ENCODE measurements at regions of chr20 and their contacts with region 1.

Region 1: DNA sequence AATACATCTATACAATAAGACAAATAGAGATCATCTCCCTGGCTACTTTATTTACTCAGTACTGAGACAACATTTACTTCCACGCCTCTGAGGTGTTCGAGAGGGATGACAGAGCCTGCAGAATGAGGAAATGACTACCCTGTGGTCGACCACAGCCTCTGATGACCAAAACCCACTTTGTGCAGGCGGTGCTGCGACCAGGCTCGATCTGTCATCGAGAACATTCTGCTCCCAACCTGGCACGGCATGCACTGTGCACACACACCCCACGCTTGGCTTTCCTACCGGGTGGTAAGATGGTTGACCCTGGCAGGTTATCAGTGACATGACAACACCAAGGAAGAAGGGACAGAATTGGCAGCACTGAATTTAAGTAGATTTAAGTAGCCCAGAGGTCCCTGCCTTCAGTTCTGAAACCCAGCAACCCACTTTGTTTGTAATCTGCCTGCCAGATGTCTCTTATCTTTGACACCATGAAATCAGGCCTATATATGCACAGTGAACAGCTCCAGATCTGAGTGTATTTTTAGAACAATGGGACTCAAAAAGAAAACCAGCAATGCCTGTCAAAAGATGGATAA is 42.6 kb downstream of the TTI1 start:
- DNase-seq: no peak
- H3K4me3 ChIP-seq: no peak overlapping the region
- H3K27ac ChIP-seq: peak overlapping the region; percentile 57 to 74 (median 63)
- H3K4me1 ChIP-seq: peaks cover 70 to 88% (median 85%) of the 10 kb centered on the region in 4 donors
- H3K27me3 ChIP-seq: no peaks in the 10 kb centered on the region
- CTCF ChIP-seq: no peak
- EP300 ChIP-seq: peak; percentile 28
- POLR2A ChIP-seq: no peak

Region 2: GRCh38 chr20:37384683-37385174 is 605.9 kb before region 1 on chr20:
- intact Hi-C with region 1: no loop called
- DNase-seq: no peak
- H3K4me3 ChIP-seq: peak overlapping the region; percentile 47 to 66 (median 58)
- H3K27ac ChIP-seq: peak overlapping the region in 2 of 4 donors; percentile 60 to 61
- H3K4me1 ChIP-seq: peaks cover 9 to 25% (median 18%) of the 10 kb centered on the region in 4 donors
- H3K27me3 ChIP-seq: no peaks in the 10 kb centered on the region
- CTCF ChIP-seq: peak; percentile 91 to 96 (median 93)
- EP300 ChIP-seq: no peak
- POLR2A ChIP-seq: no peak

Region 3: DNA sequence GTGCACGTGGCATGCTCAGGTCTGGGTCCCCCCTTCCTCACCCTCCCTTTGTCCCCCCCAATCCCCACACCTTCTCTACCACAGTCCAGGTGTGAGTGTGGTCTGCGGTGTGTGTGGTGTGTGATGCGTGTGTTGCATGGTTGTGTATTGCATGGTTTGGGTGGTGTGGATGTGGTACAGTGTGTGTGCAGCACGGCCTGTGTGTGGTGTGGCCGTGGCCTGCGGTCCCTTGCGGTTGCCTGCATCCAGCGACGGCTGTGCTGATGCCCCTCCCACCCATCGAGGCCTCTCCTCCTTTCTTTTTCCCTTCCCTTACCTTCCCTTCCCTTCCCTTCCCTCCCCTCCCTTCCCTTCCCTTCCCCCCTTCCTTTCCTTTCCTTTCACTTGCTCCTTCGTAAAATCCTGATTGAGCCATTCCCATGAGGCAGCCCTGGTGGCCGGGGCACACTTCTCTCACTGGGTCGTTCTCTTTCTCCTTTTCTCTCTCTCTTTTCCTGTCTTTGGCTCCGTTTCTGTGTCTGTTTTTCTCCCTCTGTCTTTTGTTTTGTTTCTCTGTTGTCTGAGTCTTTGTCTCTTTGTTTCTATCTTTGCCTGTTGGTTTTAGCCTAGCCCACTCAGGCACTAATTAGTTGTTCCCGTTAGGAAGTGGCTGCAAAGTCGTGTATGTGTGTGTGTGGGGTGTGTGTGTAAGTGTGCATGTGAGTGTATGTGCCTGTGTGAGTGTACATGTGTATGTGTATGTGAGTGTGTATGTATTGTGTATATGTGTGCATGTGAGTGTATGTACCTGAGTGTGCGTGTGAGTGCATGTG is 579.0 kb before region 1 on chr20:
- intact Hi-C with region 1: loop called (anchors 10 kb)
- DNase-seq: no peak
- H3K4me3 ChIP-seq: peak overlapping the region in 3 of 4 donors; percentile 30 to 55 (median 45)
- H3K27ac ChIP-seq: no peak overlapping the region
- H3K4me1 ChIP-seq: peaks cover 0 to 39% (median 38%) of the 10 kb centered on the region in 4 donors
- H3K27me3 ChIP-seq: peaks cover 0 to 52% (median 3%) of the 10 kb centered on the region in 4 donors
- CTCF ChIP-seq: no peak
- EP300 ChIP-seq: no peak
- POLR2A ChIP-seq: no peak

Region 4: GRCh38 chr20:37564388-37565133 is 426.1 kb before region 1 on chr20:
- intact Hi-C with region 1: loop called (anchors 5 kb)
- DNase-seq: peak; percentile 53
- H3K4me3 ChIP-seq: peak overlapping the region in 1 of 4 donors; percentile 2
- H3K27ac ChIP-seq: no peak overlapping the region
- H3K4me1 ChIP-seq: peaks cover 0 to 16% (median 13%) of the 10 kb centered on the region in 4 donors
- H3K27me3 ChIP-seq: peaks cover 0 to 54% (median 11%) of the 10 kb centered on the region in 4 donors
- CTCF ChIP-seq: peak; percentile 82 to 96 (median 86)
- EP300 ChIP-seq: no peak
- POLR2A ChIP-seq: no peak

Region 5: GRCh38 chr20:37734228-37734985 is 256.3 kb before region 1 on chr20:
- intact Hi-C with region 1: no loop called
- DNase-seq: no peak
- H3K4me3 ChIP-seq: no peak overlapping the region
- H3K27ac ChIP-seq: peak overlapping the region; percentile 12 to 54 (median 38)
- H3K4me1 ChIP-seq: peaks cover 20 to 38% (median 35%) of the 10 kb centered on the region in 4 donors
- H3K27me3 ChIP-seq: no peaks in the 10 kb centered on the region
- CTCF ChIP-seq: no peak
- EP300 ChIP-seq: no peak
- POLR2A ChIP-seq: no peak

Region 6: GRCh38 chr20:37901654-37902503 is 88.8 kb before region 1 on chr20:
- intact Hi-C with region 1: loop called (anchors 5 kb)
- DNase-seq: no peak
- H3K4me3 ChIP-seq: peak overlapping the region; percentile 58 to 66 (median 59)
- H3K27ac ChIP-seq: no peak overlapping the region
- H3K4me1 ChIP-seq: peaks cover 12 to 76% (median 67%) of the 10 kb centered on the region in 4 donors
- H3K27me3 ChIP-seq: peaks cover 0 to 47% (median 1%) of the 10 kb centered on the region in 4 donors
- CTCF ChIP-seq: peak; percentile 36 to 53 (median 42)
- EP300 ChIP-seq: no peak
- POLR2A ChIP-seq: no peak